HCT116 (cell line): ENCODE measurements at regions of chr4 and their contacts with region 1.

Region 1: DNA sequence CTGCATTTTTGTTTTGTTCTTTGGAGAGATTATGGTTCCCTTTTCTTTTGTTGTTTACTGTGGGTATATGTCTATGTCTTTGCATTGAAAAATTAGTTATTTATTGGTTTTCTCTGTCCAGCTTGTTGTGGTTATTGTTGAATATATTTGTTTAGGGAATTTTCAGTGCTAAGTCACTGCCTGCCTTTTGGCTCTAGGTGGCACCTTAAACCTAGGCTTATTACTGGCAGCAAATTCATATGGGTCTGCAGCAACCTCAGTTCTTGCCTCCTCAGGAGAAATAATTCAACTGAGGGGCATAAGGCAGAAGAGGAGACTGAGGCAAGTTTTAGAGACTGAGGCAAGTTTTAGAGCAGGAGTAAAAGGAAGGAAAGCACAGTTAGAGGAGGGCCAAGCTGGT is 1157.3 kb upstream of the AGA start:
- DNase-seq: no peak
- ATAC-seq: peak; percentile 66
- H3K4me3 ChIP-seq: no peak overlapping the region
- H3K27ac ChIP-seq: no peak overlapping the region
- H3K4me1 ChIP-seq: no peaks in the 10 kb centered on the region
- H3K27me3 ChIP-seq: no peaks in the 10 kb centered on the region
- CTCF ChIP-seq: peak; percentile 27 to 49 (median 37); a peak in 5 of 6 replicates
- POLR2A ChIP-seq: no peak
- RAD21 ChIP-seq: peak; percentile 74

Region 2: DNA sequence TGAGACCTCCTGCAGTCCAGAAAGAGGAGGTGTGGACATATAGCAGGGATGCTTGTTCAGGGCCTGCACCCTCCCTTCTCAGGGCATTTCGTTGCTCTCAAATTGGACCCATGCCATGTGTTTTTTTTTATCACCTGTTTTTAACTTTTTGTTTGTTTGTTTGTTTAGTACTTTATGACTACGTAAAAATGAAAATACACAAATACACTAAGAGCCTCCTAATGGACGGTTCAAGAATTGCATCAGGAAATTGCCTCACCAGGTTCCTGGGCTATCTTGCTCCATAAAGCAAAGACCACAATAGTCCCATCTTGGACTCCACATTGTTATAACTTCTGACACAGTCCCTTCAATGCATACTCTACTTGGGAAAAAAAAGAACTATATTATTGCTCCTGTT is 1957.8 kb after region 1 on chr4:
- CTCF ChIA-PET with region 1: no interaction called
- POLR2A ChIA-PET with region 1: no interaction called
- RAD21 ChIA-PET with region 1: no interaction called
- intact Hi-C with region 1: loop called (anchors 10 kb)
- DNase-seq: peak; percentile 15
- ATAC-seq: peak; percentile 71; the same call in 1 of the 2 replicates
- H3K4me3 ChIP-seq: no peak overlapping the region
- H3K27ac ChIP-seq: no peak overlapping the region
- H3K4me1 ChIP-seq: no peaks in the 10 kb centered on the region
- H3K27me3 ChIP-seq: no peaks in the 10 kb centered on the region
- CTCF ChIP-seq: peak; percentile 5 to 59 (median 52); a peak in 4 of 6 replicates
- POLR2A ChIP-seq: no peak
- RAD21 ChIP-seq: peak; percentile 30